ENCODE measurements at regions of chr10 and their contacts with region 1.

Region 1: GRCh38 chr10:75235375-75236177 is at the start of gene COMTD1:
- DNase-seq: peak; percentile 96 to 98
- H3K4me3 ChIP-seq: peak within 1 kb of the TSS; percentile 89
- H3K4me3 Mint-ChIP-seq: peak within 1 kb of the TSS; percentile 85
- H3K27ac Mint-ChIP-seq: peak within 1 kb of the TSS; percentile 43
- H3K4me1 ChIP-seq: peaks cover 41% of the 10 kb centered on the region
- H3K4me1 Mint-ChIP-seq: peaks cover 28% of the 10 kb centered on the region
- H3K27me3 ChIP-seq: no peaks in the 10 kb centered on the region
- H3K27me3 Mint-ChIP-seq: no peaks in the 10 kb centered on the region
- CTCF ChIP-seq: peak; percentile 100
- total RNA-seq, gene COMTD1: 38.7 and 39.0 TPM in 2 replicates

Region 2: GRCh38 chr10:74262856-74263255 is 972.7 kb before region 1 on chr10:
- CTCF ChIA-PET with region 1: no interaction called
- POLR2A ChIA-PET with region 1: no interaction called
- intact Hi-C with region 1: loop called (anchors 10 kb)
- DNase-seq: no peak
- H3K4me3 ChIP-seq: no peak overlapping the region
- H3K4me3 Mint-ChIP-seq: no peak overlapping the region
- H3K27ac Mint-ChIP-seq: no peak overlapping the region
- H3K4me1 ChIP-seq: no peaks in the 10 kb centered on the region
- H3K4me1 Mint-ChIP-seq: no peaks in the 10 kb centered on the region
- H3K27me3 ChIP-seq: no peaks in the 10 kb centered on the region
- H3K27me3 Mint-ChIP-seq: no peaks in the 10 kb centered on the region
- CTCF ChIP-seq: no peak

Region 3: DNA sequence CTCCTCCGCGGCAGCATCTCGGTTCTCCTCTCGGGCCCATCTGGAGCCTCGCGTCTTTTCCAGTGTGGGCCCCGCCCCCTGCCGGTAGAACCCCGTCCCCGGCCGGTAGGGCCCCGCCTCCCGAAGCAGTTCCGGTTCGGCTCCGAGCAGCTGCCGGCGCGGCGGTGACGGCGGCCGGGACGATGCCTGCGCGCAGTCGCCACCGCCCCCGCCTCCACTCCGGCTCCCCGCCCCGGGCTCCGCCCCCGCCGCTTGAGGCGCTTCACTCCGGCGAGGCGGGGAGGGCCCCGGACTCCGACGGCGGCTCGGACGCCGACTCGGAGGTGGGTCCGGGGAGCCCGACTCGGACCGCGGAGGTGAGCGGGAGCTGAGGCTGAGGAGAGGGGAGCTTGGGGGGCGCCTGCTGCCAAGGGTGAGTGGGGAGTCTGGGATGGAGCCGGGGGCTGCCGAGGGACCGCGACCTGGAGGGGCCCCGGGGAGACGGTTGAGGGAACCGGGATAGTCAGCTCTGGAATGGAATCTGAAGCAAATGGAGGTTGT is 124.1 kb before region 1 on chr10 and contains the start of gene SAMD8:
- CTCF ChIA-PET with region 1: no interaction called
- POLR2A ChIA-PET with region 1: no interaction called
- intact Hi-C with region 1: loop called (anchors 1 kb)
- DNase-seq: peak; percentile 99
- H3K4me3 ChIP-seq: peak within 1 kb of the TSS; percentile 75
- H3K4me3 Mint-ChIP-seq: peak within 1 kb of the TSS; percentile 88
- H3K27ac Mint-ChIP-seq: peak within 1 kb of the TSS; percentile 92
- H3K4me1 ChIP-seq: peaks cover 31% of the 10 kb centered on the region
- H3K4me1 Mint-ChIP-seq: peaks cover 31% of the 10 kb centered on the region
- H3K27me3 ChIP-seq: no peaks in the 10 kb centered on the region
- H3K27me3 Mint-ChIP-seq: no peaks in the 10 kb centered on the region
- CTCF ChIP-seq: peak in 1 of 2 experiments; percentile 53
- total RNA-seq, gene SAMD8: 25.2 and 26.9 TPM in 2 replicates

Region 4: DNA sequence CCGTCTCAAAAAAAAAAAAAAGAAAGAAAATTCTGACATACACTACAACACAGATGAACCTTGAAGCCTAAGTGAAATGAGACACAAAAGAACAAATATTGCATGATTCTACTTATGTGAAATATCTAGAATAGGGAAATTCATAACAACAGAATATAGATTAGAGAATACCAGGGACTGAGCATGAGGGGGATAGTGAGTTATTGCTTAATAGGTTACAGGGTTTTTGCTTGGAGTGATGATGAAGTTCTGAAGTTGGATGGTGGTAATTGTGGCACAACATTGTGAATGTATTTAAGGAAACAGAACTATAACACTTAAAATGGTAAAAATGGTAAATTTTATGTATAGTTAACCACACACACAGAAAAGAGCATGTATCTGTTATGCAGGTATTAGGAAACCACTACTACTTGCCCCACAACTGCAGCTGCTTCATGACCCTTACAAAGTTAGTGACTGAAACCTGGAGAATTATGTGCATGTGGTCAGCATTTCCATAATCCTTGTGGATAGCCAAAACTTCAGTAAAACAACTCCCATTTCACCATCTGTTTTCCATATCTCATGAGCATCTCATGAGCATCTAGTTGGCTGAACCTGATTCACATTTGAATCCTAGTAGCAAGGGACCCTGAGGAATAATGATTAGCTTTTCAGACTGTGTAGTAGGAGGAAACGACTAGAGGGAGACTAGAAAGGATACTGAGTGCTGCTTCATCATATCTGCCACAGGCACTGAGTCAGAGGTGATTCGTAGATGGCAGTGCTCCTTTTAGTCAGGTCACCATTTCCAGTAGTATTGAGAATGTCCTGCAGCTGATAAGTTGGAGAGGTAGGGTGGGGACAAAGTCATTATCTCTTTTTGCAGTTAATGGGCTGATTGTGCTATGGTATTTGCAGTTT is 97.8 kb before region 1 on chr10:
- CTCF ChIA-PET with region 1: no interaction called
- POLR2A ChIA-PET with region 1: no interaction called
- intact Hi-C with region 1: no loop called
- DNase-seq: peak; percentile 19 to 47
- H3K4me3 ChIP-seq: no peak overlapping the region
- H3K4me3 Mint-ChIP-seq: peak overlapping the region; percentile 47
- H3K27ac Mint-ChIP-seq: peak overlapping the region; percentile 70
- H3K4me1 ChIP-seq: peaks cover 48% of the 10 kb centered on the region
- H3K4me1 Mint-ChIP-seq: peaks cover 35% of the 10 kb centered on the region
- H3K27me3 ChIP-seq: no peaks in the 10 kb centered on the region
- H3K27me3 Mint-ChIP-seq: no peaks in the 10 kb centered on the region
- CTCF ChIP-seq: no peak

Region 5: DNA sequence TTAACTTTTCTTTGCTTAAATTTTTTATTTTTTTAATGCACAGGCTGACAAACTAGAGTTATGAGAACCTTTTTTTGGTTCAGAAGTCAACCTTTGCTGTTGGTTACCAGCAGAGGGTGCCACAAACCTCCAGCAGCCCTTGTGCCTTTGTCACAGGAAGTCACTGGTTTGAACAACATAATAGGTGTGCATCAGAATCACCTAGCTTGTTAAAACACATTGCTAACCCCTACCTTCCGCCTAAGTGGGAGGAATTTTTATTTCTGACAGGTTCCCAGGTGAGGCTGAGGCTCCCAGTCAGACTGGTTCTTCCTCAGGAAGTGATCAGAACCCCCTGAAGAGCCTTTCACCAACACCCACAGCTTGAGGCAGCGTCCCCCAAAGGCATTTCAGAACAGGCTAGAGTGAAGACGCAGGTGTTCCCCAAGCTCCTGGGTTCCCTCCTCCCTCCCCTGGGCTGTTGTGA is 47.6 kb before region 1 on chr10:
- CTCF ChIA-PET with region 1: interaction called, 108 read pairs
- POLR2A ChIA-PET with region 1: interaction called, 5 read pairs
- intact Hi-C with region 1: loop called (anchors 1 kb)
- DNase-seq: peak; percentile 65 to 66
- H3K4me3 ChIP-seq: no peak overlapping the region
- H3K4me3 Mint-ChIP-seq: no peak overlapping the region
- H3K27ac Mint-ChIP-seq: no peak overlapping the region
- H3K4me1 ChIP-seq: peaks cover 34% of the 10 kb centered on the region
- H3K4me1 Mint-ChIP-seq: peaks cover 19% of the 10 kb centered on the region
- H3K27me3 ChIP-seq: no peaks in the 10 kb centered on the region
- H3K27me3 Mint-ChIP-seq: no peaks in the 10 kb centered on the region
- CTCF ChIP-seq: peak; percentile 71 to 85

Region 6: GRCh38 chr10:75245491-75246250 is 10.1 kb after region 1 on chr10:
- CTCF ChIA-PET with region 1: interaction called, 10 read pairs
- POLR2A ChIA-PET with region 1: no interaction called
- intact Hi-C with region 1: no loop called
- DNase-seq: no peak
- H3K4me3 ChIP-seq: no peak overlapping the region
- H3K4me3 Mint-ChIP-seq: no peak overlapping the region
- H3K27ac Mint-ChIP-seq: no peak overlapping the region
- H3K4me1 ChIP-seq: peaks cover 5% of the 10 kb centered on the region; the same call in 1 of the 2 replicates
- H3K4me1 Mint-ChIP-seq: no peaks in the 10 kb centered on the region
- H3K27me3 ChIP-seq: no peaks in the 10 kb centered on the region
- H3K27me3 Mint-ChIP-seq: no peaks in the 10 kb centered on the region
- CTCF ChIP-seq: no peak

Measured in Caco-2 (cell line).